ENCODE measurements at regions of chr5 and their contacts with region 1.

Region 1: DNA sequence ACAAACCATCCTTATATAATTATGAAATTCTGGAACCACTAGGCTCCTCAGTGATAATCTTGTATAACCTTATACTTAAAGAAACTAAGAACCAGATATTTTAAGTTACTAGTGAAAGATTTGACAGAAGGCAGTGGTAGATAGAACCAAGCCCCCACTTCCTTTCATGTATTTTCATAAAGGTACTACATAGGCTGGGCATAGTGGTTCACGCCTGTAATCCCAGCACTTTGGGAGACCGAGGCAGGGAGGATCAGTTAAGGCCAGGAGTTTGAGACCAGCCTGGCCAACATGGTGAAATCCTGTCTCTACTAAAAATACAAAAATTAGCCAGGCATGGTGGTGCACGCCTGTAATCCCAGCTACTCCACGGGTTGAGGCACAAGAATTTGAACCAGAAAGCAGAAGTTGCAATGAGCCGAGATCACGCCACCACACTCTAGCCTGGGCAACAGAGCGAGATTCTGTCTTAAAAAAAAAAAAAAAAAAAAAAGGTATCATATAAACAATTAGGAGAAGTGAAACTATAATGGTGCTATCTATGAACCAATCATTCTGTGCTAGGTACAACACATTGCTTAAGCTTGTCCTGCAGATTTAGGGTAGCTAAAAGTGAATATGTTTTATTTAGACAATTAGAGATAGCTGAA is 27.9 kb upstream of the DTWD2 start:
- DNase-seq: peak; percentile 31
- ATAC-seq: peak; percentile 85
- H3K4me3 Mint-ChIP-seq: peak overlapping the region; percentile 19
- H3K27ac Mint-ChIP-seq: peak overlapping the region; percentile 91
- H3K4me1 Mint-ChIP-seq: peaks cover 57% of the 10 kb centered on the region
- H3K27me3 Mint-ChIP-seq: no peaks in the 10 kb centered on the region
- CTCF ChIP-seq: no peak

Region 2: GRCh38 chr5:118981783-118982182 is 34.5 kb before region 1 on chr5:
- CTCF ChIA-PET with region 1: no interaction called
- POLR2A ChIA-PET with region 1: no interaction called
- intact Hi-C with region 1: no loop called
- DNase-seq: no peak
- ATAC-seq: no peak
- H3K4me3 Mint-ChIP-seq: no peak overlapping the region
- H3K27ac Mint-ChIP-seq: no peak overlapping the region
- H3K4me1 Mint-ChIP-seq: peaks cover 13% of the 10 kb centered on the region
- H3K27me3 Mint-ChIP-seq: no peaks in the 10 kb centered on the region
- CTCF ChIP-seq: no peak

Region 3: DNA sequence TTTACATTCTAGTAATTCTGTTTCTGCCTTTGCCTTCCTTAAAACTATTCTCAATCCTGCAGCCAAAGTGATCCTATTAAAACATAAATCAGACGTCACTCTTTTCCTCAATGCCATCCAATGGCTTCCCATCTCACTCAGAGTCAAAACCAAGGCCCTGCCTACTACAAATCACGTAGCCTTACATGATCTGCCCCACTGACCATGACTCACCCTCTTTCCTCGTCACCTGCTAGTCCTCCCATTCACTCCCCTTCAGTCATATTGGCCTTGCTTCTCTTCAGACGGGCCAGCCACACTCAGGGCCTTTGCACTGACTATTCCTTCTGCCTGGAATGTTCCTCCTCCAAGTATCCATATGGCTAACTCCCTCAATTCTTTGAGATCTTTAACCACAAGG is 15.7 kb after region 1 on chr5:
- CTCF ChIA-PET with region 1: interaction called, 3 read pairs
- POLR2A ChIA-PET with region 1: interaction called, 15 read pairs
- intact Hi-C with region 1: loop called (anchors 2 kb)
- DNase-seq: no peak
- ATAC-seq: peak; percentile 87
- H3K4me3 Mint-ChIP-seq: peak overlapping the region; percentile 60
- H3K27ac Mint-ChIP-seq: peak overlapping the region; percentile 95
- H3K4me1 Mint-ChIP-seq: peaks cover 63% of the 10 kb centered on the region
- H3K27me3 Mint-ChIP-seq: no peaks in the 10 kb centered on the region
- CTCF ChIP-seq: no peak

Region 4: GRCh38 chr5:119048246-119048645 is 32.0 kb after region 1 on chr5:
- CTCF ChIA-PET with region 1: no interaction called
- POLR2A ChIA-PET with region 1: interaction called, 10 read pairs
- intact Hi-C with region 1: no loop called
- DNase-seq: no peak
- ATAC-seq: no peak
- H3K4me3 Mint-ChIP-seq: no peak overlapping the region
- H3K27ac Mint-ChIP-seq: no peak overlapping the region
- H3K4me1 Mint-ChIP-seq: no peaks in the 10 kb centered on the region
- H3K27me3 Mint-ChIP-seq: no peaks in the 10 kb centered on the region
- CTCF ChIP-seq: no peak

Region 5: DNA sequence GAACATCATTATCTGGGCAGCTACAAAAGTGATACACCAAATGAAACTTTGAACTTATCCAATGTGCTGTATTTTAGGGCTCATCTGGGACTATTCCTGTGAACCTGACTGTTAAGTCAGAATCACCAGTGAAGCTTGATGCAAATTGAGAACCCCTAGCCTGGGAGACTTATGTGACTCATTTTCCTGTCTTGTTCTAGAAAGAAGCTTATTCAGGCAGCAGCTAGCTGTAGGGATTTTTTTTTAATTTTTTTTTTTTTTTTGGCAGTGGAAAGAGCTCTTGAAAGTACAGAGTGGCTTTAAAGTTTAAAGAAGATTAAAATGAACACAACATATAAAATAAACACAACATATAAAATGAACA is 258.5 kb after region 1 on chr5:
- CTCF ChIA-PET with region 1: no interaction called
- POLR2A ChIA-PET with region 1: interaction called, 10 read pairs
- intact Hi-C with region 1: no loop called
- DNase-seq: no peak
- ATAC-seq: peak; percentile 42
- H3K4me3 Mint-ChIP-seq: peak overlapping the region; percentile 78
- H3K27ac Mint-ChIP-seq: peak overlapping the region; percentile 89
- H3K4me1 Mint-ChIP-seq: peaks cover 97% of the 10 kb centered on the region
- H3K27me3 Mint-ChIP-seq: no peaks in the 10 kb centered on the region
- CTCF ChIP-seq: no peak